ENCODE measurements at regions of chr10 and their contacts with region 1.

Region 1: DNA sequence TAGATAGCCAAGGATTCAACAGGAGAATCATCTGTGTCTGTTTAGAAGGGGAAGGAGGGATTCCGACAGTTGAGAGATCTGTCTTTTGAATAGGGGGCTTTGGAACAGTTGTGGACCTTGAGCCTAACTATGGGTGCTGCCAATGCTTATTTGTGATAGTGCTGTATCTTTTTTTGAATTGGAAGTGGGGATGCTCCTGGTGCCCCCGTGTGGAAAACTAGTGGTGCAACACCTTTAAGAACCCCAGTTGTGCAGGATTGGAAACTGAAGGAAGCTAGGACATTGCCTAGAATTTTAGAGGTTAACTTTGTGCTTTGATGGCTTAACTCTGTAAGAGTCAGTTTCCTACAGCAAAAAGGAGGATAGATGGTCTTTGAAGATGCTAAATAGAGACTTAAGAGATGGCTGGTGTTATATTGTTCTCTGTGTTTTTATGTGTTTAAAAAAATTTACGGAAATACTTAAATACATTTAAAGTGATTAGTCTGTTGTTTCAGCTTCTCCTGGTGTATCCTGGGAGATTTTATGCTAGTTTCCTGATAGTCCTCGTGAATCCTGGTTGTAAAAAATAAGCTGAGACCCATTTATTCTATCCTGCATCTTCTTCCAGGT is 69.3 kb downstream of the AP3M1 start:
- DNase-seq: peak; percentile 76
- H3K4me3 Mint-ChIP-seq: no peak overlapping the region
- H3K27ac Mint-ChIP-seq: no peak overlapping the region
- H3K4me1 Mint-ChIP-seq: peaks cover 23% of the 10 kb centered on the region
- H3K27me3 Mint-ChIP-seq: no peaks in the 10 kb centered on the region
- CTCF ChIP-seq: peak; percentile 71

Region 2: GRCh38 chr10:73940634-73941221 is 140.6 kb before region 1 on chr10:
- CTCF ChIA-PET with region 1: interaction called, 16 read pairs
- POLR2A ChIA-PET with region 1: interaction called, 12 read pairs
- intact Hi-C with region 1: loop called (anchors 2 kb)
- DNase-seq: peak; percentile 74
- H3K4me3 Mint-ChIP-seq: no peak overlapping the region
- H3K27ac Mint-ChIP-seq: peak overlapping the region; percentile 72
- H3K4me1 Mint-ChIP-seq: peaks cover 31% of the 10 kb centered on the region
- H3K27me3 Mint-ChIP-seq: no peaks in the 10 kb centered on the region
- CTCF ChIP-seq: peak; percentile 95

Region 3: GRCh38 chr10:74035303-74035702 is 46.0 kb before region 1 on chr10:
- CTCF ChIA-PET with region 1: interaction called, 6 read pairs
- POLR2A ChIA-PET with region 1: interaction called, 8 read pairs
- intact Hi-C with region 1: loop called (anchors 5 kb)
- DNase-seq: no peak
- H3K4me3 Mint-ChIP-seq: no peak overlapping the region
- H3K27ac Mint-ChIP-seq: peak overlapping the region; percentile 0
- H3K4me1 Mint-ChIP-seq: peaks cover 38% of the 10 kb centered on the region
- H3K27me3 Mint-ChIP-seq: no peaks in the 10 kb centered on the region
- CTCF ChIP-seq: peak; percentile 11

Region 4: DNA sequence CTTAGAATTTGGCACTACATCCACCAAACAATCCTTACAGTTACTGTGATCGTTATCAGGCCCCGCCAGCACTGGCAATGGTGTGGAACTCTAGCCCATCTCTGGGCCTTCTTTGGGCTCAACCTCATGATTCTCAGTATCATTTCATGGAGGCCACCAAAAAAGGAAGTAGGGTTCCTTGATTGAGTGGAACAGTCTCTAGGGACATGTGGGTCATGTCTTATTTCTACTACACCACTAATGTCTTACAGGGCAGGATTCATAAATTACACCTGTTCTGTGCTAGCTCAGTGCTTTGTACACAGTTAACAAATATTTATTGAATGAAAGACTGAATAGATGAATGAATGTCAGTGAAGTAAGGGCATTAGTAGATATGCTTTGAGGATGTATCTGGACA is 15.5 kb after region 1 on chr10:
- CTCF ChIA-PET with region 1: interaction called, 15 read pairs
- POLR2A ChIA-PET with region 1: interaction called, 3 read pairs
- intact Hi-C with region 1: no loop called
- DNase-seq: no peak
- H3K4me3 Mint-ChIP-seq: no peak overlapping the region
- H3K27ac Mint-ChIP-seq: no peak overlapping the region
- H3K4me1 Mint-ChIP-seq: peaks cover 6% of the 10 kb centered on the region
- H3K27me3 Mint-ChIP-seq: no peaks in the 10 kb centered on the region
- CTCF ChIP-seq: no peak

Region 5: GRCh38 chr10:74371696-74372095 is 290.4 kb after region 1 on chr10:
- CTCF ChIA-PET with region 1: no interaction called
- POLR2A ChIA-PET with region 1: no interaction called
- intact Hi-C with region 1: no loop called
- DNase-seq: no peak
- H3K4me3 Mint-ChIP-seq: no peak overlapping the region
- H3K27ac Mint-ChIP-seq: no peak overlapping the region
- H3K4me1 Mint-ChIP-seq: no peaks in the 10 kb centered on the region
- H3K27me3 Mint-ChIP-seq: no peaks in the 10 kb centered on the region
- CTCF ChIP-seq: no peak